CD4-positive, alpha-beta memory T cell (primary cell): ENCODE measurements at regions of chrX and their contacts with region 1.

Region 1: GRCh38 chrX:119871599-119872395 is at the starts of genes NDUFA1 and RNF113A:
- DNase-seq: peak; percentile 86 to 91 (median 89)
- H3K4me3 ChIP-seq: peak within 1 kb of the TSS; percentile 78 to 89
- H3K4me3 Mint-ChIP-seq: peak within 1 kb of the TSS; percentile 93 to 100 (median 96)
- H3K27ac ChIP-seq: peak within 1 kb of the TSS; percentile 85
- H3K27ac Mint-ChIP-seq: peak within 1 kb of the TSS; percentile 98 to 100 (median 98)
- H3K4me1 ChIP-seq: peaks cover 15% of the 10 kb centered on the region
- H3K4me1 Mint-ChIP-seq: peaks cover 3 to 39% (median 17%) of the 10 kb centered on the region in 4 donors
- H3K27me3 ChIP-seq: no peaks in the 10 kb centered on the region
- H3K27me3 Mint-ChIP-seq: no peaks in the 10 kb centered on the region
- total RNA-seq, gene NDUFA1: 59.7 to 62.4 TPM
- total RNA-seq, gene RNF113A: 43.0 to 45.3 TPM

Region 2: DNA sequence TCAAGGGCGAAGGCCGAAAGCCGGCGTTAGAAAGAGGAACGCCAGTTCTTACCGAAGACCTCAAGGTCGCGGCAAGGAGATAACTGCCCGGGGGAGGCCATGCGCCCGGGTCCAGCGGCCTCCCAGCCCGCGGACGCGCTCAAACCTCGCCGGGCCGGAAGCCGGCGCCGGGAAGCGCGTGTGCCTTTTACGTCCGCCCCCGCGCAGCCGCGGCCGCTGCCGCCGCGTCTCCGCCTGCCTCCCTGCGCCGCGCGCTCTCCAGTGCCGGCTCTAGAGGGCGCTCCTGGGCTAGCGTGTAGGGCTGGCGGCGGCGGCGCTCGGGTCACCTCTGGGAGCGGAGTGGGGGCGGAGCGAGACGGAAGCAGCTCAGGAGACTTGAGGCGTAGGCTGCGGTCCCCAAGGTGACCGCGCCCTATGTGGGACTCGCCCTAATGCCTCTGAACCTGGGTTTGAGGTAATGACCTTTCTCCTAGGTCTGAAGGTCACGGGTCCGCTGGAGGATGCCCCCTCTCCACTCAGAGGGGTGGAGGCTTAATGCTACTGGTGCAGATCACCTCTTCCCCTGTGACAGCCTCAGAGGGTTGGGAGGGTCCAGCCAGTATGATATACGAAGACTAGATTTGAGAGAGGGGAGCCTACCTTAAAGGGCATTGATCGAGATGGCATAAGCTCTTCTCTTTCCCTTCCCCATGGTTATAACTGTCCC is 402.7 kb before region 1 on chrX:
- CTCF ChIA-PET with region 1: no interaction called
- POLR2A ChIA-PET with region 1: no interaction called
- intact Hi-C with region 1: loop called (anchors 5 kb)
- DNase-seq: peak; percentile 85 to 88 (median 87)
- H3K4me3 ChIP-seq: peak overlapping the region; percentile 61 to 76
- H3K4me3 Mint-ChIP-seq: peak overlapping the region; percentile 85 to 92 (median 86)
- H3K27ac ChIP-seq: peak overlapping the region; percentile 93
- H3K27ac Mint-ChIP-seq: peak overlapping the region; percentile 89 to 97 (median 96)
- H3K4me1 ChIP-seq: peaks cover 17% of the 10 kb centered on the region
- H3K4me1 Mint-ChIP-seq: peaks cover 4 to 11% (median 7%) of the 10 kb centered on the region in 4 donors
- H3K27me3 ChIP-seq: no peaks in the 10 kb centered on the region
- H3K27me3 Mint-ChIP-seq: no peaks in the 10 kb centered on the region

Region 3: GRCh38 chrX:119557385-119557784 is 314.4 kb before region 1 on chrX:
- CTCF ChIA-PET with region 1: no interaction called
- POLR2A ChIA-PET with region 1: no interaction called
- intact Hi-C with region 1: no loop called
- DNase-seq: no peak
- H3K4me3 ChIP-seq: no peak overlapping the region
- H3K4me3 Mint-ChIP-seq: no peak overlapping the region
- H3K27ac ChIP-seq: no peak overlapping the region
- H3K27ac Mint-ChIP-seq: no peak overlapping the region
- H3K4me1 ChIP-seq: no peaks in the 10 kb centered on the region
- H3K4me1 Mint-ChIP-seq: peaks cover 4 to 8% (median 6%) of the 10 kb centered on the region in 4 donors
- H3K27me3 ChIP-seq: no peaks in the 10 kb centered on the region
- H3K27me3 Mint-ChIP-seq: no peaks in the 10 kb centered on the region

Region 4: DNA sequence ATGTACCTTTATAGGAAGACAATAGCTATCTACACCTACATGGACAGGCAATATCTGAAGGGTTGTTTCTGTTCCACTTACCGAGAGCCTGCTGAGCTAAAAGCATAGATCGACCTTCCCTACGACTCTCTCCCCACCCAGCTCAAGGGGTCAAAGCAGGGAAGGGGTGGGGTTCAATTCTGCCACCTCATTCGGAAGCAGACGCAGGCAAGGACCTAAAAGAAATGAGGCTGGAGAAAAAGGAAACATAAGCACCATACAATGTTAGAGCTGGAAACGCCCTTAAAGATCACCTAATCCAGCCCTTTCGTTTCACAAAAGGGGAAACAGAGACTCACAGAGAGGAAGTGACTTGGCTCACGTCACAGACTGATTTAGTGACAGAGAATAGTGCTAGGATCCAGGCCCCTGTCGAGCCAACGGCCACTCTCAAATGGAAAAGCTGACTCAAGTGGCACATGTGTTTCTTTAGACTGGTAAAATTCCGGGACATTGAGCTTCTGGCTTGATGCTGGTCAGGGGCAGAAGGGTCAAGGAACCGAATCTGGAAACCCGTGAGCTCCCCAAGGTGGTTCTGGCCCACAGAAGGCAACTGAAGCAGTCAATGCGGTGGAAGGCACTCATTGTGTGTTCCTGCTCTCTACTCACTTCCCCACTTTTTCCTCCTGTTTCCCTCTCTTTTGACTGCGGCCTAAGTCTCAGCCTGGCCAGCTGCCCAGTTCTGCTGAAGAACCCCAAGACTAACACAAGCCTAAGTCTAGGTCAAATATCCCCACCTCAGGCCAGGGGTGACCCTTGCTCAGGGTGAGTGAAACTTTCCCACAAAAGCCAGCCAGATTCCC is 186.4 kb before region 1 on chrX:
- CTCF ChIA-PET with region 1: no interaction called
- POLR2A ChIA-PET with region 1: interaction called, 4 read pairs
- intact Hi-C with region 1: loop called (anchors 5 kb)
- DNase-seq: peak; percentile 59 to 82 (median 69)
- H3K4me3 ChIP-seq: peak overlapping the region; percentile 2 to 46
- H3K4me3 Mint-ChIP-seq: peak overlapping the region; percentile 84 to 100 (median 98)
- H3K27ac ChIP-seq: peak overlapping the region; percentile 89
- H3K27ac Mint-ChIP-seq: peak overlapping the region; percentile 98 to 100 (median 99)
- H3K4me1 ChIP-seq: peaks cover 90% of the 10 kb centered on the region
- H3K4me1 Mint-ChIP-seq: peaks cover 36 to 89% (median 76%) of the 10 kb centered on the region in 4 donors
- H3K27me3 ChIP-seq: no peaks in the 10 kb centered on the region
- H3K27me3 Mint-ChIP-seq: no peaks in the 10 kb centered on the region

Region 5: GRCh38 chrX:119828446-119828845 is 43.4 kb before region 1 on chrX:
- CTCF ChIA-PET with region 1: no interaction called
- POLR2A ChIA-PET with region 1: no interaction called
- intact Hi-C with region 1: no loop called
- DNase-seq: no peak
- H3K4me3 ChIP-seq: no peak overlapping the region
- H3K4me3 Mint-ChIP-seq: no peak overlapping the region
- H3K27ac ChIP-seq: no peak overlapping the region
- H3K27ac Mint-ChIP-seq: no peak overlapping the region
- H3K4me1 ChIP-seq: no peaks in the 10 kb centered on the region
- H3K4me1 Mint-ChIP-seq: peaks cover 0 to 6% (median 3%) of the 10 kb centered on the region in 4 donors
- H3K27me3 ChIP-seq: no peaks in the 10 kb centered on the region
- H3K27me3 Mint-ChIP-seq: no peaks in the 10 kb centered on the region

Region 6: GRCh38 chrX:119852382-119853353 is 19.1 kb before region 1 on chrX and contains the start of gene UPF3B:
- CTCF ChIA-PET with region 1: no interaction called
- POLR2A ChIA-PET with region 1: interaction called, 51 read pairs
- intact Hi-C with region 1: loop called (anchors 1 kb)
- DNase-seq: peak; percentile 88 to 98 (median 94)
- H3K4me3 ChIP-seq: peak within 1 kb of the TSS; percentile 54 to 82
- H3K4me3 Mint-ChIP-seq: peak within 1 kb of the TSS; percentile 96 to 100 (median 99)
- H3K27ac ChIP-seq: peak within 1 kb of the TSS; percentile 95
- H3K27ac Mint-ChIP-seq: peak within 1 kb of the TSS; percentile 92 to 100 (median 99)
- H3K4me1 ChIP-seq: peaks cover 10% of the 10 kb centered on the region
- H3K4me1 Mint-ChIP-seq: peaks cover 10 to 17% (median 14%) of the 10 kb centered on the region in 4 donors
- H3K27me3 ChIP-seq: no peaks in the 10 kb centered on the region
- H3K27me3 Mint-ChIP-seq: no peaks in the 10 kb centered on the region
- total RNA-seq, gene UPF3B: 11.1 to 12.1 TPM

Region 7: GRCh38 chrX:119943185-119943988 is 71.6 kb after region 1 on chrX and contains the start of gene NKAP:
- CTCF ChIA-PET with region 1: no interaction called
- POLR2A ChIA-PET with region 1: interaction called, 6 read pairs
- intact Hi-C with region 1: loop called (anchors 5 kb)
- DNase-seq: peak; percentile 78 to 82 (median 81)
- H3K4me3 ChIP-seq: peak within 1 kb of the TSS; percentile 57 to 73
- H3K4me3 Mint-ChIP-seq: peak within 1 kb of the TSS; percentile 89 to 97 (median 92)
- H3K27ac ChIP-seq: peak within 1 kb of the TSS; percentile 93
- H3K27ac Mint-ChIP-seq: peak within 1 kb of the TSS; percentile 88 to 98 (median 91)
- H3K4me1 ChIP-seq: peaks cover 20% of the 10 kb centered on the region
- H3K4me1 Mint-ChIP-seq: peaks cover 10 to 29% (median 20%) of the 10 kb centered on the region in 4 donors
- H3K27me3 ChIP-seq: no peaks in the 10 kb centered on the region
- H3K27me3 Mint-ChIP-seq: peaks cover under 1% of the 10 kb centered on the region in 2 donors
- total RNA-seq, gene NKAP: 15.1 to 15.9 TPM